ENCODE measurements at regions of chr11 and their contacts with region 1.

Region 1: GRCh38 chr11:104594198-104594958 is 303.9 kb downstream of the CASP12 start:
- DNase-seq: no peak
- H3K4me3 ChIP-seq: no peak overlapping the region
- H3K27ac ChIP-seq: no peak overlapping the region
- H3K4me1 ChIP-seq: no peaks in the 10 kb centered on the region
- H3K27me3 ChIP-seq: no peaks in the 10 kb centered on the region
- CTCF ChIP-seq: no peak
- EP300 ChIP-seq: no peak
- POLR2A ChIP-seq: no peak

Region 2: DNA sequence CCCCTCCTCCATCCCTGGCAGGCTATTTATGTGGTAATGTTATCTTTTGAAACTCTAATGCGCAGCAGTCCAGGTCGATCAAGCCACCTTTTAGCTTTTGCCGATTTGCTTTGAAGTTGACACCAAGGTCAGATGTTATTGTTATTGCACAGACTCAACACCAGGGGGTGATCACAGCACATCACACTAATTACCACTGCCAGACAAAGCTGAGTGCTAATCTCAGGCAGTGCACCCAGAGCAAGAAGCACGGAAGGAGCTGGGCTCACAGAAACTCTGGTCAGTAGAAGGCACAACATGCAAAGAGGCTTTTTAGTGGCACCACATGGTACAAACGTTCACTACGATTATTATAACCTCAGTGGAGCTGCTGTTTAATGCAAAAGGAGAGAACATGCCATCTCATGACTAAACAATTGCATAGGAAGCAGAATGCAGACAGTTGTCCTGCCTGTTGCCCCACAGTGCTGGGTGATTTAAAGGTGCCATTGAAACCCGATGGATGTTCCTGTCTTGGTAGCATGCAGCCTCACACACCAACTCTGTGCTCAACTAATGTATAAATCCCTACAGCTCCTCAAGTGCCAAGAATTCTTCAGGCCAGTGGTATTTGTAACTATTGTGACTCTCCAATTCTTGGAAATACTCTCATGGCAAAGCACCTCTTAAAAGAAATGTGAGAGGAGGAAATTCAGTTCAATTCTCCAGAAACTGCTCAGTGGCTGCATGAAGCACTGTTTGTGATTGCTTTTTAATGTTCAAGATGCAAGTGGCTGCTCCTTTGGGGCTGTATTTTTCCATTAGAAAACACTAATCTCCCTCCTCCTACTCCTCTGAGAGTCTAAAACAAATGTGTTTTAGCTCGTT is 911.8 kb before region 1 on chr11:
- intact Hi-C with region 1: loop called in 1 of 4 experiments (anchors 10 kb)
- DNase-seq: peak; percentile 46 to 76 (median 62)
- H3K4me3 ChIP-seq: no peak overlapping the region
- H3K27ac ChIP-seq: no peak overlapping the region
- H3K4me1 ChIP-seq: no peaks in the 10 kb centered on the region
- H3K27me3 ChIP-seq: no peaks in the 10 kb centered on the region
- CTCF ChIP-seq: peak; percentile 65 to 91 (median 90)
- EP300 ChIP-seq: no peak
- POLR2A ChIP-seq: no peak

Region 3: GRCh38 chr11:104451197-104451893 is 143.0 kb before region 1 on chr11:
- intact Hi-C with region 1: no loop called
- DNase-seq: peak in 4 of 5 donors; percentile 15 to 20 (median 17)
- H3K4me3 ChIP-seq: no peak overlapping the region
- H3K27ac ChIP-seq: peak overlapping the region in 1 of 2 donors; percentile 51
- H3K4me1 ChIP-seq: peaks cover 2% of the 10 kb centered on the region
- H3K27me3 ChIP-seq: no peaks in the 10 kb centered on the region
- CTCF ChIP-seq: no peak
- EP300 ChIP-seq: no peak
- POLR2A ChIP-seq: no peak